ENCODE measurements at regions of chr12 and their contacts with region 1.

Region 1: DNA sequence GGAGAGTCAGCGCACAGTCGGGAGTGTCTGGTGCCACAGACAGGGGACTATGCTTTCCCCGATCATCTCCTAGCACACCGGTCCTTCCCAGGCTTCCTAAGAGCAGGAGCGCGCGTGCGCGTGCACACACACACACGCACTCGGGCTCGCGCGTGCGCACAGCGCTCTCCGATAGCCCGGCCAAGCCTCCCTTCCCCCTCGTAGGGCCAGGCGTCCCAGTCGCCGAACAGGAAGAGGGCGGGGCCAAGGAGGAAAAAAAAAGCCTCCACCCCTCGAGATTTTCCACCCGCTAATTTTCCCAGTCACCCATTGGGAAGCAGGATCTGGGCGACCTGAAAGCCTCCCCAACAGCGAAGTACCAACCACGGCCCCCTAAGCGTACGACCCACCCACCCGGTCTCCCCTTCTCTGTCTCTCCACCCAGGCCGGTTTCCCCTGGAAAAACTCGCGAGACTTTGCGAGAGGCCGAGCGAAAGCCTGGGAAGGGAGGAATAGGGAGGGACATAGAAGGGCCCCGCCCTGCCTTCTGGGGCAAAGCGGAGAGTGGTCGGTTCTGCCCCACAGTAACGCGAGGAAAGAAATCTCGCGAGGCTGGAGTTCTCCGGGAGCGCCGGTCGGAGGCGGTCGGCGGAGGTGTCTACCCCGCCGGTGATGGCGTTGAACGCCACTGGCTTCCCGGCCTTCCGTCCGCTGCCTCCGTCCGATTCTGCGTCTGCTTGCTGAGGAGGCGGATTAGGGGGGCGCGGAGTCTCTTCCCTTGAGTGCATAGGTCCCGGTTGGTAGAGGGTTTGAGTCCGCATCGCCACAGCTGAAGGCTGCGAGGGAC is at the starts of genes FGFR1OP2 and INTS13:
- DNase-seq: peak; percentile 90 to 99 (median 96)
- ATAC-seq: peak; percentile 89
- H3K4me3 ChIP-seq: peak within 1 kb of the TSS; percentile 92 to 97
- H3K4me3 Mint-ChIP-seq: peak within 1 kb of the TSS; percentile 98
- H3K27ac ChIP-seq: peak within 1 kb of the TSS; percentile 89 to 94
- H3K27ac Mint-ChIP-seq: peak within 1 kb of the TSS; percentile 97
- H3K4me1 ChIP-seq: peaks cover 47% of the 10 kb centered on the region
- H3K4me1 Mint-ChIP-seq: peaks cover 74% of the 10 kb centered on the region
- H3K27me3 ChIP-seq: no peaks in the 10 kb centered on the region
- H3K27me3 Mint-ChIP-seq: no peaks in the 10 kb centered on the region
- CTCF ChIP-seq: no peak
- total RNA-seq, gene FGFR1OP2: 44.1 to 47.5 TPM
- total RNA-seq, gene INTS13: 11.8 to 12.1 TPM

Region 2: GRCh38 chr12:25195056-25195971 is 1742.8 kb before region 1 on chr12 and contains the starts of genes DNAI7 and ETFRF1:
- CTCF ChIA-PET with region 1: no interaction called
- POLR2A ChIA-PET with region 1: no interaction called
- intact Hi-C with region 1: loop called in 1 of 2 experiments (anchors 10 kb)
- DNase-seq: peak; percentile 92 to 99 (median 96)
- ATAC-seq: peak; percentile 97
- H3K4me3 ChIP-seq: peak within 1 kb of the TSS; percentile 77
- H3K4me3 Mint-ChIP-seq: peak within 1 kb of the TSS; percentile 97
- H3K27ac ChIP-seq: peak within 1 kb of the TSS; percentile 93 to 97
- H3K27ac Mint-ChIP-seq: peak within 1 kb of the TSS; percentile 99
- H3K4me1 ChIP-seq: peaks cover 18% of the 10 kb centered on the region
- H3K4me1 Mint-ChIP-seq: peaks cover 40% of the 10 kb centered on the region
- H3K27me3 ChIP-seq: no peaks in the 10 kb centered on the region
- H3K27me3 Mint-ChIP-seq: no peaks in the 10 kb centered on the region
- CTCF ChIP-seq: no peak
- total RNA-seq, gene DNAI7: 0.16 to 0.53 TPM
- total RNA-seq, gene ETFRF1: 29.2 to 30.1 TPM

Region 3: DNA sequence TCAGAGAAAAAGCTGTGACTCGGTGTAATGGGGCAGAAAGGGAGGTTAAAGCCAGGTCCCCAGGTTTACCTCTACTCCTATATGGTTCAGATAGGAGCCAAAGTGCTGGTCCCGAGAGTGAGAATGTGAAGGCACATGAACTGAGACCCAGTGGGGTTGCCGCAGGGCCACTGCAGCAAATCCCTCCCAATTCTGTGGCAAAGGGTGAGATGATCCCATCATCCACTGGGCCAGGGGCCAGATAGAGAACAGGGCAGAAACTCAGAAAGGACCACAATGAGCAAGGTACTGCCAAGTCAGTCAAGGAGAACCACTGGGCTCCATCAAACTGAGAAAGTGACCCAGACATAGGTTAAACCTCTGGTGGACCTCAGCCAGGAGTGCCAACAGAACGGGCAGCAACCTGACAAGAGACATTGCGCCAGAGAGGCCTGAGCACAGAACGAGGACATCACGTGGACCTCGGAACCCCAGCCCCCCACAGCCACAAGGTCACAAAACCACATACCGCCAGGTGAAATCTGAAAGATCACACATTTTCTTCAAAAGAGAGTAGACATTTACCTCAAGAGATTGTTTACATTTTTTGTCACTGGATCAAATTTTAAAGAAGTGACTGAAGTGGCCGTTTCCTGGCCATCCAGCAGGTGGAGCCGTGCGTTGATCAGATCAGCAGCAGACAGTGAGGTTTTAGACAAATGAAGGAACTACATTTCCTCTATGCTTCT is 84.6 kb before region 1 on chr12:
- CTCF ChIA-PET with region 1: no interaction called
- POLR2A ChIA-PET with region 1: no interaction called
- intact Hi-C with region 1: loop called in 1 of 2 experiments (anchors 5 kb)
- DNase-seq: peak; percentile 55 to 83 (median 69)
- ATAC-seq: peak; percentile 98
- H3K4me3 ChIP-seq: no peak overlapping the region
- H3K4me3 Mint-ChIP-seq: no peak overlapping the region
- H3K27ac ChIP-seq: no peak overlapping the region
- H3K27ac Mint-ChIP-seq: peak overlapping the region; percentile 33
- H3K4me1 ChIP-seq: peaks cover 6% of the 10 kb centered on the region
- H3K4me1 Mint-ChIP-seq: no peaks in the 10 kb centered on the region
- H3K27me3 ChIP-seq: no peaks in the 10 kb centered on the region
- H3K27me3 Mint-ChIP-seq: peaks cover 4% of the 10 kb centered on the region
- CTCF ChIP-seq: peak; percentile 92

Region 4: GRCh38 chr12:27014085-27014858 is 76.2 kb after region 1 on chr12 and contains the start of gene TM7SF3:
- CTCF ChIA-PET with region 1: interaction called, 4 read pairs
- POLR2A ChIA-PET with region 1: interaction called, 4 read pairs
- intact Hi-C with region 1: loop called (anchors 1 kb)
- DNase-seq: peak; percentile 92 to 98 (median 96)
- ATAC-seq: peak; percentile 89
- H3K4me3 ChIP-seq: peak within 1 kb of the TSS; percentile 87 to 93
- H3K4me3 Mint-ChIP-seq: peak within 1 kb of the TSS; percentile 93
- H3K27ac ChIP-seq: peak within 1 kb of the TSS; percentile 80 to 98
- H3K27ac Mint-ChIP-seq: peak within 1 kb of the TSS; percentile 92
- H3K4me1 ChIP-seq: peaks cover 25% of the 10 kb centered on the region
- H3K4me1 Mint-ChIP-seq: peaks cover 51% of the 10 kb centered on the region
- H3K27me3 ChIP-seq: no peaks in the 10 kb centered on the region
- H3K27me3 Mint-ChIP-seq: no peaks in the 10 kb centered on the region
- CTCF ChIP-seq: peak; percentile 98
- total RNA-seq, gene TM7SF3: 5.8 to 7.2 TPM

Region 5: GRCh38 chr12:27703710-27704452 is 765.8 kb after region 1 on chr12:
- CTCF ChIA-PET with region 1: no interaction called
- POLR2A ChIA-PET with region 1: no interaction called
- intact Hi-C with region 1: loop called in 1 of 2 experiments (anchors 10 kb)
- DNase-seq: peak; percentile 32 to 77 (median 64)
- ATAC-seq: peak; percentile 98
- H3K4me3 ChIP-seq: no peak overlapping the region
- H3K4me3 Mint-ChIP-seq: no peak overlapping the region
- H3K27ac ChIP-seq: no peak overlapping the region
- H3K27ac Mint-ChIP-seq: no peak overlapping the region
- H3K4me1 ChIP-seq: no peaks in the 10 kb centered on the region
- H3K4me1 Mint-ChIP-seq: no peaks in the 10 kb centered on the region
- H3K27me3 ChIP-seq: no peaks in the 10 kb centered on the region
- H3K27me3 Mint-ChIP-seq: peaks cover 6% of the 10 kb centered on the region
- CTCF ChIP-seq: peak; percentile 74